GM13977 (cell line): ENCODE measurements at regions of chr13 and their contacts with region 1.

Region 1: DNA sequence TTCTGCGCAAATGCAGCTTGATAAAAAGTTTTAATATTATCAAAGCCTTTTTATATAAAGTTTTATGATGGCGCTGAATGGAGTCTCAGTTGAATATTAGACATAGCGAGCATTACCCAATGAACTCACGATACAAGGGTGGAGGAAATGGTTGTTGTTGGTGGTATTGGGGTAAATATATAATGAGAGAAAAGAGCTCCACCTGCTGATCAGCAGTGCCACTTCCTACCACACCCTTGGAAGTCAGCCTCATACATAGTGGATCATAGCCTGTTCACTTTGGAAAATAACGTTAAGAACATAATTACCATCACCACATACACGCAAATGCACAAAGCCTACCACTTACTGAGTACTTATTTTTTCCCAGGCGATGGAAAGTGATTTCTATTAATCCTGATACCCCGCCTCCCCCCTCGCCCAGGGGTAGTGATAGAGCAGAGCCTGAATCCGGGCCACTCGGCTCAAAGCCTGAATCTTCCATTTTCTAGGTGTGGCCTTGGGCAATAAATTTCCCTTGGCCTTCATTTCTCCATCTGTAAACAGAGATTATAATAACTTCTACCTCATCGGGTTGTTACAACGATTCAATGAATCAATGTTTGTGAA is 358.3 kb downstream of the KLF5 start:
- DNase-seq: peak; percentile 8
- CTCF ChIP-seq: peak; percentile 16

Region 2: GRCh38 chr13:72839831-72840426 is 577.2 kb before region 1 on chr13:
- in situ Hi-C with region 1: loop called (anchors 25 kb)
- DNase-seq: peak; percentile 54
- CTCF ChIP-seq: peak; percentile 77

Region 3: DNA sequence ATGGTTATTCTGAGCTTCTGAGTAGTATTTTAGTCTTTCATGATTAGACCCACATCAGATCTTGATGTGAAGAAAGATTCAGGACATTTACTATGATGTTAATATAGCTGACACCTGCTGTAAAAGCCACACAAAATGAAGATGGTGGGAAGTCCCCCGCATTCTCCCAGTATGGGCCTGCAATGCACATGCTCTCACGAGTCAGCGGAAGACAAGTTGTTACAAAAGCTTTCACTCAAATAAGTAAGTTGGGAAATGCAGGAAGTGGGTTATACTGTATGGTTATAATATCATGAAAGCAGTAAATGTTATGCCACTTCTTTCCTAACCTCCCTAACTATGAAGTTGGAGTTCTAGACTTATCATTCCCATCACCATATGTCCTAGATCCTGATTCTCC is 186.4 kb before region 1 on chr13:
- in situ Hi-C with region 1: no loop called
- DNase-seq: no peak
- CTCF ChIP-seq: no peak

Region 4: DNA sequence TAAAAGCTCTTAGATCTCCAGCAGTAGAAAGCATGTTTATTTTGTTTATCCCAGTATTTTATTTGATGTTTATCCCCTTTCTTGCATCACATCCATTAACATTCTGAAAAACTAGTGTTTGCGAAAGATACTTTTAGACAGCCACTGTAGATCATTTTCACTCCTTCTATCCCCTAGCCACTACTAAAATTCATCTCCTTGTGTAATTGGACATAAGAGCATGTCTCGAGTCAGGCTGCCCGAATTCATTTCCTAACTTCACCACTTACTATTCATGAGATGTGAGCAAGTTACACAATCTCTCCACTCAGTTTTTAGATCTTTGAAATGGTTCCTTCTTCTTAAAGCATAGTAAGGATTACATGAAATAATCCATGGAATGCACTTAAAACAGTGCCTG is 155.7 kb after region 1 on chr13:
- in situ Hi-C with region 1: no loop called
- DNase-seq: no peak
- CTCF ChIP-seq: no peak

Region 5: DNA sequence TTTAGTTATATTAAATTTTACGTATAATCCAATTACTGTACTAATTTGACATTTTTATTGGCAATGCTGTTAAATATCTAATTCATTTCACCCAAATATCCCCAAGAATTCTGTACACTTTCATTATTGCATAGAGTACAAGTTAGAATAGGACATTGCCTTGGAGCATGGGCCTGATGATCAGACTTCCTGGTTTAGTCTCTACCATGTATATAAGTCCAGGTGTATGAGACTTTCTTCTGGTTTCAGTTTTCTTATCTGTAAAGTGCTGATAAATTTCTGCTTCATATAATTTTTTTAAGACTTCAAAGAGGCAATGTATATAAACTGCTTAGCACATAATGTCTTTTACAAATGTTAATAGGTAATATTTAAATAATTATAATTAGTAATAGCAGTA is 537.7 kb after region 1 on chr13:
- in situ Hi-C with region 1: no loop called
- DNase-seq: no peak
- CTCF ChIP-seq: no peak